Colonic mucosa (tissue), 4 donors: ENCODE measurements at regions of chr19 and their contacts with region 1.

Region 1: GRCh38 chr19:44770550-44771257 is 7.0 kb upstream of the CBLC start:
- DNase-seq: peak; percentile 99
- H3K4me3 ChIP-seq: no peak overlapping the region
- H3K27ac ChIP-seq: peak overlapping the region; percentile 20
- H3K4me1 ChIP-seq: peaks cover 5% of the 10 kb centered on the region
- H3K27me3 ChIP-seq: no peaks in the 10 kb centered on the region
- CTCF ChIP-seq: peak; percentile 83

Region 2: DNA sequence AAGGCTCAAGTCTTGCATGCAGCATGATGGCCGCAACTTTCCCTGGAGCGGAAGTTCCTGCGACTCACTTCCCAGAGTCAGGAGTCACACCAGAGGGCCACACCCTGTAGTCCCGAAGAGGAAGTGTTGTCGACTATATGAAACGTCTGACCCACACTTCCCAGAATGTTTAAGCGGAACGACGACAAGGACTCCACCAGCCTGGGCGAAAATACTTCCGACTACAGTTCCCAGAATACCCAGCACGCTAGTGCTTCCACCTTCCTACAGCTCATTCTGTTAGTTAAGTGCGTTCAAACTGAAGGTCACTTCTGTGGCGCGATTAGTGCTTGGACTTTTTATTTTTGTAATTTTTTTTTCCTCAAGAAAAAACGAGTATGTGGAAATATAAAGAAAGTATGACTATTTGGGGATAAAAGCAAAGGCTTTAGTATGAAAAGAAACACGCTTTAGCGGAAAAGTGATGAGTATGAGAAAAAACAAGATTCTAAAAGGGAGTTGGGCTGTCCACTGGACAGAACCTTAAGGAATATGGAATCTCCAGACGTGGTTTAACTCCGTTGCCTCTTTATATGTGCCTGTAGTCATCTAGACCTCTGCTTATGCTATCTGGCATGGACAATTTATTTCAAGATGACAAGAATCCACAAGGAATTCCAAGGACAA is 398.8 kb before region 1 on chr19:
- intact Hi-C with region 1: no loop called
- DNase-seq: no peak
- H3K4me3 ChIP-seq: no peak overlapping the region
- H3K27ac ChIP-seq: no peak overlapping the region
- H3K4me1 ChIP-seq: no peaks in the 10 kb centered on the region
- H3K27me3 ChIP-seq: no peaks in the 10 kb centered on the region
- CTCF ChIP-seq: no peak

Region 3: GRCh38 chr19:44500148-44500956 is 270.4 kb before region 1 on chr19 and contains the start of gene ZNF180:
- intact Hi-C with region 1: no loop called
- DNase-seq: peak; percentile 98
- H3K4me3 ChIP-seq: peak within 1 kb of the TSS; percentile 74
- H3K27ac ChIP-seq: peak within 1 kb of the TSS; percentile 81
- H3K4me1 ChIP-seq: peaks cover 4% of the 10 kb centered on the region
- H3K27me3 ChIP-seq: no peaks in the 10 kb centered on the region
- CTCF ChIP-seq: peak; percentile 44
- total RNA-seq, gene ZNF180: 6.4 to 7.3 TPM

Region 4: GRCh38 chr19:44570984-44571684 is 199.6 kb before region 1 on chr19:
- intact Hi-C with region 1: loop called (anchors 10 kb)
- DNase-seq: peak; percentile 86
- H3K4me3 ChIP-seq: no peak overlapping the region
- H3K27ac ChIP-seq: no peak overlapping the region
- H3K4me1 ChIP-seq: no peaks in the 10 kb centered on the region
- H3K27me3 ChIP-seq: no peaks in the 10 kb centered on the region
- CTCF ChIP-seq: peak; percentile 80

Region 5: DNA sequence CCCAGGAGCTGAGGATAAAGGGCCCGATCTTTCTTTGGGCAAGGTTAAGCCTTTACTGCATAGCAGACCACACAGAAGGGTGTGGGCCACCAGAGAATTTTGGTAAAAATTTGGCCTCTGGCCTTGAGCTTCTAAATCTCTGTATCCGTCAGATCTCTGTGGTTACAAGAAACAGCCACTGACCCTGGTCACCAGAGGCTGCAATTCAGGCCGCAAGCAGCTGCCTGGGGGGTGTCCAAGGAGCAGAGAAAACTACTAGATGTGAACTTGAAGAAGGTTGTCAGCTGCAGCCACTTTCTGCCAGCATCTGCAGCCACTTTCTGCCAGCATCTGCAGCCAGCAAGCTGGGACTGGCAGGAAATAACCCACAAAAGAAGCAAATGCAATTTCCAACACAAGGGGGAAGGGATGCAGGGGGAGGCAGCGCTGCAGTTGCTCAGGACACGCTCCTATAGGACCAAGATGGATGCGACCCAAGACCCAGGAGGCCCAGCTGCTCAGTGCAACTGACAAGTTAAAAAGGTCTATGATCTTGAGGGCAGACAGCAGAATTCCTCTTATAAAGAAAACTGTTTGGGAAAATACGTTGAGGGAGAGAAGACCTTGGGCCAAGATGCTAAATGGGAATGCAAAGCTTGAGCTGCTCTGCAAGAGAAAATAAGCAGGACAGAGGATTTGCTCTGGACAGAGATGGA is 107.9 kb before region 1 on chr19:
- intact Hi-C with region 1: no loop called
- DNase-seq: no peak
- H3K4me3 ChIP-seq: no peak overlapping the region
- H3K27ac ChIP-seq: no peak overlapping the region
- H3K4me1 ChIP-seq: no peaks in the 10 kb centered on the region
- H3K27me3 ChIP-seq: no peaks in the 10 kb centered on the region
- CTCF ChIP-seq: no peak

Region 6: GRCh38 chr19:44723952-44724319 is 46.8 kb before region 1 on chr19:
- intact Hi-C with region 1: loop called (anchors 1 kb)
- DNase-seq: peak; percentile 92
- H3K4me3 ChIP-seq: peak overlapping the region; percentile 34
- H3K27ac ChIP-seq: peak overlapping the region; percentile 89
- H3K4me1 ChIP-seq: peaks cover 10% of the 10 kb centered on the region
- H3K27me3 ChIP-seq: no peaks in the 10 kb centered on the region
- CTCF ChIP-seq: peak; percentile 95